GM12878 (cell line): ENCODE measurements at regions of chr4 and their contacts with region 1.

Region 1: GRCh38 chr4:1360423-1361283 is 13.6 kb downstream of the UVSSA start:
- DNase-seq: no peak
- ATAC-seq: no peak
- H3K4me3 ChIP-seq: no peak overlapping the region
- H3K27ac ChIP-seq: no peak overlapping the region
- H3K4me1 ChIP-seq: no peaks in the 10 kb centered on the region
- H3K27me3 ChIP-seq: no peaks in the 10 kb centered on the region
- CTCF ChIP-seq: no peak
- EP300 ChIP-seq: no peak
- POLR2A ChIP-seq: no peak
- RAD21 ChIP-seq: no peak

Region 2: DNA sequence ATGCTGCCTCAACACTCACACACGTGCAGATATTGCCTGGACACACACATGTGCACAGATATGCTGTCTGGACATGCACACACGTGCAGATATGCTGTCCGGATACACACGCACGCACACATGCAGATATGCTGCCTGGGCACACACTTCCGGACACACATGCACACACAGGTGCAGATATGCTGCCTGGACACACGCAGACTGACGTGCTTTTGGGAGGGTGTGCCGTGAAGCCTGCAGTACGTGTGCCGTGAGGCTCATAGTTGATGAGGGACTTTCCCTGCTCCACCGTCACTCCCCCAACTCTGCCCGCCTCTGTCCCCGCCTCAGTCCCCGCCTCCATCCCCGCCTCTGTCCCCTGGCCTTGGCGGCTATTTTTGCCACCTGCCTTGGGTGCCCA is 334.5 kb before region 1 on chr4:
- CTCF ChIA-PET with region 1: no interaction called
- POLR2A ChIA-PET with region 1: no interaction called
- RAD21 ChIA-PET with region 1: no interaction called
- SMC1A ChIA-PET with region 1: no interaction called
- in situ Hi-C with region 1: no loop called
- intact Hi-C with region 1: loop called (anchors 5 kb)
- DNase-seq: peak; percentile 56
- ATAC-seq: peak; percentile 92
- H3K4me3 ChIP-seq: no peak overlapping the region
- H3K27ac ChIP-seq: no peak overlapping the region
- H3K4me1 ChIP-seq: peaks cover 17% of the 10 kb centered on the region
- H3K27me3 ChIP-seq: no peaks in the 10 kb centered on the region
- CTCF ChIP-seq: no peak
- EP300 ChIP-seq: no peak
- POLR2A ChIP-seq: no peak
- RAD21 ChIP-seq: no peak

Region 3: DNA sequence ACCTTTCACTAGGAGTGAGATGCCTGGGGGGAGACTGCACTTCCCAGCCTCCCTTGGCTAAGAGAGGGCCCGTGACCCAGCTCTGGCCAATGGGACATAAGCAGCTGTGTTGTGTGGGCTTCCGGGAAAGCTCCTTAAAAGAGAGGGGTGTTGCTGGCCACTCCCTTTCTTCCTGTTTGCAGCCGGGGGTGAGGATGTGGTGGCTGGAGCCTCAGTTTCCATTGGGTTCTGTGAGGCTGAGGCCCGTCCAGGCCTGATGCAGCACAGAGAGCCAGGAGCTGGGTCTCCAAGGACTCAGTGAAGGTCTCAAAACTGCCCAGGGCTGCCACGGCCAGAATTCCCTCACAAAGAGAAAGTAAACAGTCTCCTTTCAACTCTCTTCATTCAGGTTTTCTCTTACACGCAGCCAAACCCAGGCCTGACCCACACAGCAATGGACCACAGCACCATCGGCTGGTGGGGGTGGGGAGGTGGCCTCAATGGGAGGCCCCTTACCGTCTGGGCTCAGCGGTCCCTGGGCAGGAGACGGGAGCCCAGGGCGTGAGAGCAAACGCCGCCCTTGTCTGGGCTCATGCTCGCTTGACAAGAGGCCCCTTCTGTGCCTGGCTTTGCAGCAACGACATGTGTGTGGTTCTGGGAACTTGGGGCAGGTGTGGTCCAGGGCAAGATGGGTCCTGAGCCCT is 39.0 kb after region 1 on chr4:
- CTCF ChIA-PET with region 1: no interaction called
- POLR2A ChIA-PET with region 1: no interaction called
- RAD21 ChIA-PET with region 1: no interaction called
- SMC1A ChIA-PET with region 1: no interaction called
- in situ Hi-C with region 1: no loop called
- intact Hi-C with region 1: no loop called
- DNase-seq: no peak
- ATAC-seq: no peak
- H3K4me3 ChIP-seq: no peak overlapping the region
- H3K27ac ChIP-seq: no peak overlapping the region
- H3K4me1 ChIP-seq: no peaks in the 10 kb centered on the region
- H3K27me3 ChIP-seq: no peaks in the 10 kb centered on the region
- CTCF ChIP-seq: no peak
- EP300 ChIP-seq: no peak
- POLR2A ChIP-seq: no peak
- RAD21 ChIP-seq: no peak